ENCODE measurements at regions of chr3 and their contacts with region 1.

Region 1: GRCh38 chr3:11803977-11804892 is 42.5 kb downstream of the TAMM41 start:
- DNase-seq: no peak
- H3K4me3 ChIP-seq: no peak overlapping the region
- H3K27ac ChIP-seq: no peak overlapping the region
- H3K4me1 ChIP-seq: no peaks in the 10 kb centered on the region
- H3K27me3 ChIP-seq: no peaks in the 10 kb centered on the region
- CTCF ChIP-seq: peak; percentile 57 to 88 (median 76)
- EP300 ChIP-seq: no peak
- POLR2A ChIP-seq: no peak
- RAD21 ChIP-seq: peak; percentile 74 to 80

Region 2: DNA sequence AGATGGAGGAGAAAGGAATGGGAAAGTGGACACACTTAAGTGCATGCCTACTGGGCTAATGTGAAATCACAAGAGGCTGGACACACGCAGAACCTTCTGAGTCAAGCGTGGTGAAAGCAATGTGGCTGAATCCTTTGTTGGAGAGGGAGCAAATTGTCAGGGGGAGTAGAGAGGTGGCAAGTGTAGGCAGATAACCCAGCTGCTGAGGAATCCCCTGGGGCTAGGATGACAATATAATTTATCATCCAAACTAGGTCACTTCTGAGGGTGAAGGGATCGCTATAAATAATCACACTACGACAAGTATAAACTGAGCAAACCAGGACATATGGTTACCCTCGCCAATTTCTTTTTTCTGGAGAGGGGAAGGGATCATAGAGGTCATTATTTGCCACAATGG is 13.8 kb after region 1 on chr3:
- CTCF ChIA-PET with region 1: interaction called, 13 read pairs
- POLR2A ChIA-PET with region 1: no interaction called
- DNase-seq: no peak
- H3K4me3 ChIP-seq: no peak overlapping the region
- H3K27ac ChIP-seq: no peak overlapping the region
- H3K4me1 ChIP-seq: peaks cover 0 to 5% (median 0%) of the 10 kb centered on the region in 4 experiments; a peak in 1 of 7 replicates
- H3K27me3 ChIP-seq: no peaks in the 10 kb centered on the region
- CTCF ChIP-seq: no peak
- EP300 ChIP-seq: no peak
- POLR2A ChIP-seq: no peak
- RAD21 ChIP-seq: no peak

Region 3: GRCh38 chr3:11844891-11845290 is 40.7 kb after region 1 on chr3:
- CTCF ChIA-PET with region 1: no interaction called
- POLR2A ChIA-PET with region 1: no interaction called
- DNase-seq: no peak
- H3K4me3 ChIP-seq: peak overlapping the region in 1 of 4 experiments; percentile 85; a peak in 1 of 8 replicates
- H3K27ac ChIP-seq: no peak overlapping the region
- H3K4me1 ChIP-seq: peaks cover 0 to 2% (median 0%) of the 10 kb centered on the region in 4 experiments; a peak in 3 of 7 replicates
- H3K27me3 ChIP-seq: peaks cover 0 to 13% (median 3%) of the 10 kb centered on the region in 4 experiments; a peak in 3 of 7 replicates
- CTCF ChIP-seq: no peak
- EP300 ChIP-seq: no peak
- POLR2A ChIP-seq: no peak
- RAD21 ChIP-seq: no peak

Region 4: GRCh38 chr3:12462159-12462947 is 658.1 kb after region 1 on chr3:
- CTCF ChIA-PET with region 1: no interaction called
- POLR2A ChIA-PET with region 1: no interaction called
- DNase-seq: no peak
- H3K4me3 ChIP-seq: no peak overlapping the region
- H3K27ac ChIP-seq: no peak overlapping the region
- H3K4me1 ChIP-seq: 0 out of 7 replicates have a peak, but pooled peaks cover 0 to 2% (median 0%) of the 10 kb centered on the region in 4 experiments
- H3K27me3 ChIP-seq: no peaks in the 10 kb centered on the region
- CTCF ChIP-seq: no peak
- EP300 ChIP-seq: no peak
- POLR2A ChIP-seq: no peak
- RAD21 ChIP-seq: no peak